PC-3 (cell line): ENCODE measurements at regions of chr1 and their contacts with region 1.

Region 1: DNA sequence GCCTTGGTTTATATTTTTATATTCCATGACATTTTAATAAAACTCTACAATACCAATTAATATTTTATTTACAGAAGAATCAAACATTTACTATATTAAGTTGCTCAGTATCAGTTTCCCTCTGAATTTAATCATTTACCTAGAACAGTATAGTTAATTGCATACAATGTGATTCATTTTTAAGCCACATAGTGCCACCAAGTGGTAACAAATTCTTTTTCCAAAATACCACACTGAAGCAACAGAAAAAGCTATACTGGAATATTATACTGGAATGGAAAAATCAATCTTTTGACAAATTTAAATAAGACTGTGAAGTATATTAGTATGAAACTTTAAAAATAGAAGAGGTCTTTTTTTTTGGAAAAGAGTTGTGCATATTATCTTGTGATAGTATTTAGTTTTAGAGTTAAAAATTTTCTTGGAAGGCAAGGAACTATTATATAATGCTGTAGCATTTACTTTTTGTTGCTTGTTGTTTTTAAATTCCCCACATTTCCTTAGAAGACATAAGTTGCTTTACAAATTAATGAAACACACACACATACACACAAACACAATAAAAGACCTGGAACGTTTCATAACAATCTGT is 57.3 kb downstream of the ZNF644 start:
- DNase-seq: peak; percentile 44
- ATAC-seq: peak; percentile 70
- H3K4me3 ChIP-seq: no peak overlapping the region
- H3K27ac ChIP-seq: no peak overlapping the region
- H3K4me1 ChIP-seq: peaks cover 16% of the 10 kb centered on the region
- H3K27me3 ChIP-seq: no peaks in the 10 kb centered on the region
- CTCF ChIP-seq: peak; percentile 76

Region 2: GRCh38 chr1:90721210-90722194 is 243.0 kb before region 1 on chr1:
- CTCF ChIA-PET with region 1: interaction called, 15 read pairs
- POLR2A ChIA-PET with region 1: no interaction called
- intact Hi-C with region 1: loop called (anchors 1 kb)
- DNase-seq: peak; percentile 83
- ATAC-seq: peak; percentile 65
- H3K4me3 ChIP-seq: no peak overlapping the region
- H3K27ac ChIP-seq: no peak overlapping the region
- H3K4me1 ChIP-seq: 0 out of 2 replicates have a peak, but pooled peaks cover 7% of the 10 kb centered on the region
- H3K27me3 ChIP-seq: peaks cover 24% of the 10 kb centered on the region
- CTCF ChIP-seq: peak; percentile 86

Region 3: DNA sequence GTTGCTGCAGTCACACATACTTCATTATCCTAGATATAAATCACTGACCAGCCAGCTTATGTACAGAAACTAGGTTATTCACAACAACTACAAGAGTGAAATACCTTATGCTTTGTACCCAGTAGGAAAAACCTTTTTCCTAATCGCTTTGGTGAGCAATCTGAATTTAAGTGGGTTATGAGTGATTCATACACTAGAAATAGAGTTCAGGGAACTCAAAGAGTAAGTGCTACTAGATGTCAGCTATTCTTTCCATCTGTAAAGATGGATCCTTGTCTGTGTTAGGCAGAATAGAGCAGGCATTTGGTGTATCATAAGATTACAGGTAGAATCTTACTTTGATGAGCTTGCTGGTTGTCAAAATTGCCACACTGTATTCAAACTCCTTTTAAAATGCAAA is 44.6 kb before region 1 on chr1:
- CTCF ChIA-PET with region 1: no interaction called
- POLR2A ChIA-PET with region 1: no interaction called
- intact Hi-C with region 1: loop called (anchors 5 kb)
- DNase-seq: no peak
- ATAC-seq: no peak
- H3K4me3 ChIP-seq: no peak overlapping the region
- H3K27ac ChIP-seq: no peak overlapping the region
- H3K4me1 ChIP-seq: no peaks in the 10 kb centered on the region
- H3K27me3 ChIP-seq: no peaks in the 10 kb centered on the region
- CTCF ChIP-seq: no peak

Region 4: DNA sequence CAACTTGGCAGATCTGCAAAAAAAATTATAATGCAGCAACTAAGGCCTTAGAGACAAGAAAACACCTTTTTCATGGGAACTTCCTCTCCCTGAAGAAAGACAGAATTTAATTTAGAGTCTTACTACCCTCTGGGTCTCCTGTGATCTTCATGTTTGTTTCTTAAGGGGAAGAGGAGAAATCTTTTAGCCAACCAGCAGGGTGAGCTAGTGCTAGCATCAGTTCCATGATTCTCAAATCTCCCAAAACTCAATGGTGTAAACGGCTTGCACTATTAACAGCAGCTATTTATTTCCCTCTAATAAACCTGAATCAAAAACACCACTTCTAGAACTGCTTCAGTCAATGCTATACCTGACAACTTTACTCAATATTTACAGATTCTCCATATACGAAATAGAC is 53.5 kb after region 1 on chr1:
- CTCF ChIA-PET with region 1: no interaction called
- POLR2A ChIA-PET with region 1: no interaction called
- intact Hi-C with region 1: loop called (anchors 10 kb)
- DNase-seq: peak; percentile 38
- ATAC-seq: no peak
- H3K4me3 ChIP-seq: no peak overlapping the region
- H3K27ac ChIP-seq: no peak overlapping the region
- H3K4me1 ChIP-seq: peaks cover 66% of the 10 kb centered on the region
- H3K27me3 ChIP-seq: no peaks in the 10 kb centered on the region
- CTCF ChIP-seq: peak; percentile 59